ENCODE measurements at regions of chr4 and their contacts with region 1.

Region 1: GRCh38 chr4:109574102-109574850 is 14.2 kb downstream of the MCUB start:
- DNase-seq: peak; percentile 40
- H3K4me3 ChIP-seq: no peak overlapping the region
- H3K27ac ChIP-seq: no peak overlapping the region
- H3K4me1 ChIP-seq: peaks cover 19% of the 10 kb centered on the region
- H3K27me3 ChIP-seq: no peaks in the 10 kb centered on the region
- CTCF ChIP-seq: peak in 1 of 2 donors; percentile 2
- POLR2A ChIP-seq: no peak

Region 2: DNA sequence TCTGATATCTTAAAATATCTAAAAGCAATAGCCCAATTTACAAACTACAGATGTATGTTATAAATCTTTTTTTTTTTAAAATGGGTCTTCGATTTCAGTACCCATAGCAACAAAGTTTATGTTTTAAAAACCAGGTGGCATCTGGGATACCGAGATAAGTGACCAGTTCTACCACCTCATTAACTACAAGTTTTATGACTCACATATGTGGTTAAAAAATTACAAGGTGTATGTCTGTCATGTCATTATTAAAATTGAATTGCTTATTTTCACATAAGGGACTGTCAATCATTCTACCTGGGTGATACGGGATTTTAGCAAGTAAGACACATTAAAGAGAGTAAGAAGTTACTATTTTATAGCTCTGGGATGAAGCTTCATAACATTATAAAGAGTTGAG is 619.4 kb before region 1 on chr4:
- CTCF ChIA-PET with region 1: no interaction called
- POLR2A ChIA-PET with region 1: no interaction called
- dilution Hi-C with region 1: no loop called
- intact Hi-C with region 1: no loop called
- DNase-seq: no peak
- H3K4me3 ChIP-seq: no peak overlapping the region
- H3K27ac ChIP-seq: no peak overlapping the region
- H3K4me1 ChIP-seq: peaks cover 9% of the 10 kb centered on the region
- H3K27me3 ChIP-seq: no peaks in the 10 kb centered on the region
- CTCF ChIP-seq: no peak
- POLR2A ChIP-seq: no peak

Region 3: DNA sequence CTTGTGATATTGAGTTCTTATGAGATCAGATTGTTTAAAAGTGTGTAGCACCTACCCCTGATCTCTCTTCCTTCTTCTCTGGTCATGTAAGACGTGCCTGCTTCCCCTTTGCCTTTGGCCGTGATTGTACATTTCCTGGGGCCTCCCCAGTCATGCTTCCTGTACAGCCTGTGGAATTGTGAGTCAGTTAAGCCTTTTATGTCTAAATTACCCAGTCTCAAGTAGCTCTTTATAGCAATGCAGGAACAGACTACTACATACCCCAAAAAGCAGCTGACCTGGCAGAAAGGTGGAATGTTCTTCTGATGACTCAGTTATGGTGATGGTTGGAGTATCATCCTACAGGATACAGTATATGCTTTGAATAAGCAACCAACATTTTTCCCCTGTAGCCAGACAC is 25.6 kb before region 1 on chr4:
- CTCF ChIA-PET with region 1: interaction called, 3 read pairs
- POLR2A ChIA-PET with region 1: no interaction called
- dilution Hi-C with region 1: no loop called
- intact Hi-C with region 1: loop called (anchors 1 kb)
- DNase-seq: peak; percentile 94
- H3K4me3 ChIP-seq: peak overlapping the region in 1 of 3 experiments; percentile 1
- H3K27ac ChIP-seq: peak overlapping the region; percentile 84
- H3K4me1 ChIP-seq: peaks cover 17% of the 10 kb centered on the region
- H3K27me3 ChIP-seq: no peaks in the 10 kb centered on the region
- CTCF ChIP-seq: no peak
- POLR2A ChIP-seq: peak; percentile 36

Region 4: GRCh38 chr4:109658871-109659410 is 84.7 kb after region 1 on chr4:
- CTCF ChIA-PET with region 1: interaction called, 11 read pairs
- POLR2A ChIA-PET with region 1: no interaction called
- dilution Hi-C with region 1: no loop called
- intact Hi-C with region 1: no loop called
- DNase-seq: peak; percentile 45
- H3K4me3 ChIP-seq: no peak overlapping the region
- H3K27ac ChIP-seq: no peak overlapping the region
- H3K4me1 ChIP-seq: no peaks in the 10 kb centered on the region
- H3K27me3 ChIP-seq: no peaks in the 10 kb centered on the region
- CTCF ChIP-seq: no peak
- POLR2A ChIP-seq: no peak

Region 5: DNA sequence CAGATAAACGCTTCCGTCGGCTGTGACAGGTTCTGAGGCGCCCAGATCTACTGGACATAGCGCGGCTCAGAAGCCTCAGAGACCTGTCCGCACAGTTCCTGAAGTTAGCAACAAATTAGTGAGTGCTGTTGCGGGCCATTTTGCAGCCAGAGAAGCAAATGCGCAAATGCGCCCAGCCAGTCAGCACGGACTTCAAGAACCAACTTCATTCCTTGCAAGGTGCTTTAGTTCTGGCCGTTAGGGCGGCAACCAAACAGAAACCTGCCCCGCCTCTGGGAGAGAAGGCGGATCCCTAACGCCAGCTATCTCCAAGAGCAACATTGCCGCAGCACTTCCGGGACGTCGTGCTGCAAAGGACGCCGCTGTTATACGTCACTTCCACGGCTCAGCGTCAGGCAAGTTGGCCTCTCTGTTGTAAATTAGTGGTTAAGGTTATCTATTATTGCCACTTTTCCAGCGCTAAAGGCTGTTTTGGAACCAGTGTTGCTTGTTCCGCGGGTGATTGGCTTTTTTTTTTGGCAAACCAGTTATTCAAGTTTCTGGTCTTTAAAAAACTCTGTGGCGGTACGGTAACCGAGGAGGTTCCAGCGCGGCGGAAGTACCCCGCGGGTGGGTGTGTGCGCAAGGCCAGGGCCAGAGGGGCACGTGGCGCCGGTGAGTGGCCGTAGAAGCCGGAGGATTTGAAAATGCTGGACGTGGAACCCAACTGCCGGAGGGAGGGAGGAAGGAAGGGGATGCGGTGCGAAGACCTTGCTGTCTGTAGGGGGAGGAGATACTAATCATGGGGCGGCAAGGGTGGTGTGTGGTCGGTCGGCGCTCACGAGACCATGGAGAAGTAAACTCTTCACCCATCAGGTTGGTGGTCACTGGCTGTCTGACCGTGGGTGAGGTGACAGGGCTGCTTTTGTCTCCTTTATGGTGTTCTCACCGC is 241.1 kb after region 1 on chr4 and contains the start of gene GAR1:
- CTCF ChIA-PET with region 1: no interaction called
- POLR2A ChIA-PET with region 1: no interaction called
- dilution Hi-C with region 1: no loop called
- intact Hi-C with region 1: loop called (anchors 2 kb)
- DNase-seq: peak; percentile 94
- H3K4me3 ChIP-seq: peak within 1 kb of the TSS; percentile 35 to 92 (median 70)
- H3K27ac ChIP-seq: peak within 1 kb of the TSS; percentile 67
- H3K4me1 ChIP-seq: peaks cover 13% of the 10 kb centered on the region
- H3K27me3 ChIP-seq: no peaks in the 10 kb centered on the region
- CTCF ChIP-seq: no peak
- POLR2A ChIP-seq: peak; percentile 52
- total RNA-seq, gene GAR1: 27.7 and 29.1 TPM in 2 replicates

Region 6: DNA sequence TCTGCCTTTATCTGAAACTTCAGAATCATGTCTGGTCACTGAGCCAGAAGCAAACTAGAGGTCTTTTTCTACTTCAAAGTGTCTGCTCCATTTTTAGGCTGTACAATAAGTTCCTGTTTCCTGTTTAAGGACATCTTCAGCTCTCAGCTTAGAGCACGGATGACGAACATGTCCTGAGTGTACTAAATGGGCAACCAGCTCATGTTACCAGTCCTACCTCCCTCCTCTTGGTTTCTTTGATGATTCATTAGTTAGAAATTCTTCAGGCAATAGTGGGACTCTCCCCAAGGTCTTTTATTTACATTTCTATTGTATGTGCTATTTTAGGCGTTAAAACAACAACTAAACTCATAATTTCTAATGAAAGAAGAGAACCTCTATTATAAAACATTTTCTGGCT is 959.7 kb after region 1 on chr4:
- CTCF ChIA-PET with region 1: no interaction called
- POLR2A ChIA-PET with region 1: no interaction called
- dilution Hi-C with region 1: no loop called
- intact Hi-C with region 1: loop called (anchors 5 kb)
- DNase-seq: peak; percentile 94
- H3K4me3 ChIP-seq: peak overlapping the region in 1 of 3 experiments; percentile 54
- H3K27ac ChIP-seq: peak overlapping the region; percentile 94
- H3K4me1 ChIP-seq: peaks cover 38% of the 10 kb centered on the region
- H3K27me3 ChIP-seq: no peaks in the 10 kb centered on the region
- CTCF ChIP-seq: no peak
- POLR2A ChIP-seq: no peak

Measured in endothelial cell of umbilical vein (primary cell).